ENCODE measurements at regions of chr4 and their contacts with region 1.

Region 1: GRCh38 chr4:115090483-115091075 is 22.8 kb downstream of the NDST4 start:
- DNase-seq: peak; percentile 53
- H3K4me3 Mint-ChIP-seq: no peak overlapping the region
- H3K27ac Mint-ChIP-seq: no peak overlapping the region
- H3K4me1 Mint-ChIP-seq: no peaks in the 10 kb centered on the region
- H3K27me3 Mint-ChIP-seq: peaks cover 26% of the 10 kb centered on the region
- CTCF ChIP-seq: peak; percentile 53

Region 2: DNA sequence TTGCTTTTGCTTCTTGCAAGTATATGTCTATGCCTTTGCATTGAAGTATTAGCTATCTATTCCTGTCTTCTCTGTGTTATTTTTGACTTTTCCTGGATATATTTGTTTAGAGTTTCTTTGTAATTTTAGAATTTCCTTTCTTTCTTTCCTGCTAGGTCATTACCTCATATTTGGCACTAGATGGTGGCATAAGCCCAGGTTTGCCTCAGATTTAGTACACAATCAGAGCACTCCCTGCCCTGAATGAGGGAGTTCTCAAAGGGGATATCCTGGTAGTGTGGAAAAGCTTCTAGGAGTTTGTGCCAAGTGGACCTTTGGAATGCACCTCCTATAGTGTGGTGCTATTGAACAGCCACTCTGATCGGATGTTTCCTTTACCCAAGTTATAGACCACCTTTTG is 310.4 kb before region 1 on chr4:
- CTCF ChIA-PET with region 1: interaction called, 4 read pairs
- POLR2A ChIA-PET with region 1: no interaction called
- intact Hi-C with region 1: loop called (anchors 1 kb)
- DNase-seq: peak; percentile 64
- H3K4me3 Mint-ChIP-seq: no peak overlapping the region
- H3K27ac Mint-ChIP-seq: no peak overlapping the region
- H3K4me1 Mint-ChIP-seq: no peaks in the 10 kb centered on the region
- H3K27me3 Mint-ChIP-seq: peaks cover 12% of the 10 kb centered on the region
- CTCF ChIP-seq: peak; percentile 54